ENCODE measurements at regions of chr17 and their contacts with region 1.

Region 1: GRCh38 chr17:68771867-68772515 is 170.8 kb upstream of the FAM20A start:
- DNase-seq: no peak
- ATAC-seq: peak; percentile 60 to 73
- H3K4me3 ChIP-seq: peak overlapping the region in 2 of 4 donors; percentile 15 to 28
- H3K27ac ChIP-seq: peak overlapping the region in 3 of 4 donors; percentile 12 to 53 (median 38)
- H3K4me1 ChIP-seq: peaks cover 0 to 8% of the 10 kb centered on the region in 2 donors
- H3K27me3 ChIP-seq: no peaks in the 10 kb centered on the region
- CTCF ChIP-seq: peak; percentile 22 to 55 (median 34)
- POLR2A ChIP-seq: no peak

Region 2: GRCh38 chr17:68733241-68734176 is 38.5 kb before region 1 on chr17:
- in situ Hi-C with region 1: no loop called
- intact Hi-C with region 1: no loop called
- DNase-seq: peak; percentile 6 to 32
- ATAC-seq: peak in 1 of 2 donors; percentile 41
- H3K4me3 ChIP-seq: no peak overlapping the region
- H3K27ac ChIP-seq: peak overlapping the region in 1 of 4 donors; percentile 18
- H3K4me1 ChIP-seq: peaks cover 4% of the 10 kb centered on the region in 2 donors
- H3K27me3 ChIP-seq: no peaks in the 10 kb centered on the region
- CTCF ChIP-seq: no peak
- POLR2A ChIP-seq: no peak

Region 3: DNA sequence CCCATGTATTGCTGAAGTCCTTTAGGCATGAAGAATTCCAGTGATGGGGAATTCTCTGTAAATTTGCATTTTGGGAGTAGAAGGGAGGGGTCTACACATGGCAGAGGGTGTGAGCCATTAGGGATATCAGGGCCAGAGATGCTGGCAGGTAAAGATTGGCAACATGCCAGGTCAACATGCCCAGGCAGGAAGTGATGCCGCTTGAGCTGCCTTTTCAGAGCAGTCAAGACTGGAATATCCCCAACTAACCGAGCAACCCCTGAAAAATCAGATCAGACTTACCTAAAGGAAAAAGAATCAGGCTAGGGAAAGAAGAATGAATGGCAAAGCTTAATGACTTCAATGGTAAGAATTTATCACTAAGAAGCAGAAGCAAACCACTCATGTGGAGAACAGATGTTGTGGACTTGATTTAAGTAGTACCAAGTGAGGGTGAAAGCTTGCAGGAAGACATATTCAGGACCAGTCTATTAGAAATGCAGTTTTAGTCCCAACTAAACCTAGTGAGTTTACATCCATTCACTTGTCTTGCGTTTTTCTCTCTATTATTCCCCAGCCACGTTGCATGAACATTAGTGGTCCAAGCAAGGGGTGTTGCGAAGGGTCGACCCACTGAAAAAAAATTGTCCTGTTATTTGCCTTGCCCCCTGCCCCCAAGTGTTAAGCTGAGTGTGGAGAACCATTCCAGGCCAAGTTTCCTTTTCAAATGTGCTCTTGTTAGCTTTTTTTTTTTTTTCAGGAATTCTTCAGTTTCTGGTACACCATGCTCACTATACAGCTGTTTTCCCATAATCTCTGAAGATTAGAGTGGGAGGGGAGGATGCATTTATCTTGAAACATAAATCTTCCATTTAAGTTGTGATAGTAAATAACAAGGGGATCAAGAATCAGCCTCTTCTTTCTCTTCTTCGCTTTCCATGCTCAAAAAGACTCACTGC is 78.0 kb after region 1 on chr17:
- in situ Hi-C with region 1: no loop called
- intact Hi-C with region 1: loop called (anchors 10 kb)
- DNase-seq: no peak
- ATAC-seq: no peak
- H3K4me3 ChIP-seq: no peak overlapping the region
- H3K27ac ChIP-seq: no peak overlapping the region
- H3K4me1 ChIP-seq: peaks cover 0 to 10% of the 10 kb centered on the region in 2 donors
- H3K27me3 ChIP-seq: no peaks in the 10 kb centered on the region
- CTCF ChIP-seq: no peak
- POLR2A ChIP-seq: no peak

Region 4: GRCh38 chr17:68892658-68893057 is 120.7 kb after region 1 on chr17:
- in situ Hi-C with region 1: no loop called
- intact Hi-C with region 1: no loop called
- DNase-seq: no peak
- ATAC-seq: no peak
- H3K4me3 ChIP-seq: no peak overlapping the region
- H3K27ac ChIP-seq: no peak overlapping the region
- H3K4me1 ChIP-seq: no peaks in the 10 kb centered on the region
- H3K27me3 ChIP-seq: no peaks in the 10 kb centered on the region
- CTCF ChIP-seq: no peak
- POLR2A ChIP-seq: no peak

Region 5: GRCh38 chr17:68972119-68972704 is 200.2 kb after region 1 on chr17:
- in situ Hi-C with region 1: loop called (anchors 5 to 10 kb)
- intact Hi-C with region 1: loop called (anchors 1 kb)
- DNase-seq: no peak
- ATAC-seq: no peak
- H3K4me3 ChIP-seq: no peak overlapping the region
- H3K27ac ChIP-seq: no peak overlapping the region
- H3K4me1 ChIP-seq: no peaks in the 10 kb centered on the region
- H3K27me3 ChIP-seq: no peaks in the 10 kb centered on the region
- CTCF ChIP-seq: peak; percentile 25 to 52 (median 44)
- POLR2A ChIP-seq: no peak

Region 6: DNA sequence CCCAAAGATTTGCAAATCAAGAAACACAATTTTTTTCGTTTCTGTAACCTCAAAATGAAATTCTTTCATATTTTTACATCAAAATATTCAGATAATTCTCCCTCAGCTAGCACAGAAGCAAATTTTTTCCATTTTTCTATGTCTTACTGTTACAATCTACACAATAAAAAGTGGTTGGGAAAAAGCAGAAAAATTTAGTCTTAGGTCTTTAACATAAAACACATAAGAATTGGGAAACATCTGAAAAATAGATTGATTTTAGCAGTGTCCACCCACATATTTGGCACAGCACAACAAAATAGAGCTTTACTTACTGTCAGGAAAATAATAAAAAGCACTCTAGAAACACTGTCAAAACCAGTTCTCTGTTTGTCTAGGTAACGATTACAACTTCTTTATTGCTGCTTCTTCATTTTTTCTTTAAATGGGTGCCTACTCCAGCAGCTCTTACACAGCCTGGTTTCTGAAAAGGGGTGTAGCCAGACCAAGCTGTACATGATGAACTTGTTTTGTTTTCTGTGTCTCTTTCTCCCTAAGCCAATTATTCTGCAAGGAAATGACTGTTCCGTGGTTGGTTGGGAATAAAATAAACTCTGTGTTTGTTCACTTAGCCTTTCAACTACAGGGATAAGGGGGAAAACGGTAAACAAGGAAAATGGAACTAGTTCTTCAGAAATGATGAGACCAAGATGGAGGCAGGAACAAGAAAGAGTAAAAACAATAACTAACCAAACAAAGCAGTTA is 369.6 kb after region 1 on chr17 and contains the start of gene ABCA6:
- in situ Hi-C with region 1: no loop called
- intact Hi-C with region 1: loop called (anchors 10 kb)
- DNase-seq: no peak
- ATAC-seq: peak in 1 of 2 donors; percentile 81
- H3K4me3 ChIP-seq: peak within 1 kb of the TSS; percentile 27 to 42 (median 32)
- H3K27ac ChIP-seq: peak within 1 kb of the TSS; percentile 40 to 71 (median 44)
- H3K4me1 ChIP-seq: peaks cover 0 to 7% of the 10 kb centered on the region in 2 donors
- H3K27me3 ChIP-seq: no peaks in the 10 kb centered on the region
- CTCF ChIP-seq: no peak
- POLR2A ChIP-seq: peak in 1 of 2 donors; percentile 40
- total RNA-seq, gene ABCA6: 12.8 to 82.3 (median 15.7) TPM

Region 7: DNA sequence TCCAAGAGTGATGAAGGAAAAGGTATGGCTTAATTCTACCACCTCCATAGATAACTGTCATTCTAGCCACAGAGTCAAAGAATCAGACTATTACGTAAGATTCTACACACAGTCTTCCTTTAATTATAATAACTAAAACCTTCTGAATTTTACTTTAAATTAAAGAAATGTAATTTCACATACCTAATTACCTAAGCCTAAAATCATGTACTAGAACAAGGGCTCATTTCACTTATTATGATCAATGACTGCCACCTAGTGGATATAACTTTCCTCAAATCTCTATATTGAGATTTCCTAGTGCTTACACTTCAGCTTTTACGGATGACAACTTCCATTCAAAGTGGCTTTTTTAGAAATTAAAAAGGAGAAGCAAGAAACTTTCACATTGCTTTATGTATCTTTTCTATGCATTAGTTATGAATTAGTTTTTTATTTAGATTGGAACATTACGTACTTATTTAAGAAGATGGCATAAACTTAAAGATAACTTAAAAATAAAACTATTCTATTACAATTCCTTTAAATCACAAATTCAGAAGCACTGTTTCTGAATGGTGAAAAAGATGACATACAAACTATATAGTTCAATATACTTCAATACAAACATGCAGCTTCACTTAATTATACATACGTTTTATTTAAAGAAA is 474.9 kb after region 1 on chr17:
- in situ Hi-C with region 1: loop called (anchors 10 kb)
- intact Hi-C with region 1: no loop called
- DNase-seq: no peak
- ATAC-seq: no peak
- H3K4me3 ChIP-seq: no peak overlapping the region
- H3K27ac ChIP-seq: no peak overlapping the region
- H3K4me1 ChIP-seq: no peaks in the 10 kb centered on the region
- H3K27me3 ChIP-seq: no peaks in the 10 kb centered on the region
- CTCF ChIP-seq: peak in 4 of 5 experiments; percentile 34 to 54 (median 46)
- POLR2A ChIP-seq: no peak